AG04450 (cell line): ENCODE measurements at regions of chr17 and their contacts with region 1.

Region 1: GRCh38 chr17:67390646-67391384 is 13.7 kb downstream of the PITPNC1 start:
- DNase-seq: peak; percentile 65
- H3K4me3 ChIP-seq: peak overlapping the region; percentile 31
- H3K27ac ChIP-seq: peak overlapping the region; percentile 61
- H3K27me3 ChIP-seq: peaks cover 3% of the 10 kb centered on the region
- CTCF ChIP-seq: no peak

Region 2: DNA sequence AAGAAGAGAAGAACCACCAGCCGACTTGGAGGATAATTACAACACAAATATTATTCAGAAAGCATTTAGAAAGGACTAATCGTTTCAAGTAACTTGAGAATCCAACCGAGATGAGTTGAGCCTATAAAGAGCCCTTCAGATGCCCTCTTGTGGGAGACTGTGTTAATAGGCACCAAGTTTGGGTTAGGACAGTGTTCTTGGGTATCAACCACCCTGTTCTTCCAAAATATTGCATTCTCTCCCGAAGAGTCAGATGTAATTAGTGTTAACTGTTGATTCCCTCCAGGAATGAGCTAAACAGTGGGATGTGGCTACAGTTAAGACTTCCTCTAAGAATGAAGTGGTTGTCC is 239.1 kb after region 1 on chr17:
- CTCF ChIA-PET with region 1: interaction called, 18 read pairs
- POLR2A ChIA-PET with region 1: no interaction called
- DNase-seq: no peak
- H3K4me3 ChIP-seq: no peak overlapping the region
- H3K27ac ChIP-seq: no peak overlapping the region
- H3K27me3 ChIP-seq: no peaks in the 10 kb centered on the region
- CTCF ChIP-seq: peak; percentile 70